CD4-positive, alpha-beta memory T cell (primary cell): ENCODE measurements at regions of chr1 and their contacts with region 1.

Region 1: DNA sequence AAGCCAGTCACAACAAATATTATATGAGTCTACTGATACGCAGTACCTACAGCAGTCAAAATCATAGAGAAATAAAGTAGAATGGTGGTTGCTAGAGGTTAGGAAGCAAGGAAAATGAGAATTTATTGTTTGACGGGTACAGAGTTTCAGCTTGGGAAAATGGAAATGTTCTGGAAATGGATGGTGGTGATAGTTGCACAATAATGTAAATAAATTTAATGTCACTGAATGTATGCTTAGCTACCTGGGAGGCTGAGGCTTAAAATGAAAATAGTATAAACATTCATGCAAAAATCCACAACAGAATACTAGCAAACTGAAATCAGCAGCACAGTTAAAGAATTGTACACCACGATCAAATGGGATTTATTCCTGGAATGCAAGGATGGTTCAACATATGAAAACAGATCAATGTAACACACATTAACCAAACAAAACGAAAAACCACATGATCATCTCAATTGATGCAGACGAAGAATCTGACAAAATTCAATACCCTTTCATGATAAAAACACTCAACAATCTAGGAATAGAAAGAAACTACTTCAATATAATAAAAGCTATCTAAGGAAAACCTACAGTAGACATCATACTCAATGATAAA is 10.7 kb downstream of the TUT4 start:
- DNase-seq: no peak
- H3K4me3 ChIP-seq: no peak overlapping the region
- H3K4me3 Mint-ChIP-seq: peak overlapping the region in 1 of 8 donors; percentile 22
- H3K27ac ChIP-seq: no peak overlapping the region
- H3K27ac Mint-ChIP-seq: peak overlapping the region in 1 of 7 donors; percentile 54
- H3K4me1 ChIP-seq: peaks cover 7% of the 10 kb centered on the region
- H3K4me1 Mint-ChIP-seq: peaks cover 18 to 32% (median 24%) of the 10 kb centered on the region in 4 donors
- H3K27me3 ChIP-seq: no peaks in the 10 kb centered on the region
- H3K27me3 Mint-ChIP-seq: no peaks in the 10 kb centered on the region

Region 2: DNA sequence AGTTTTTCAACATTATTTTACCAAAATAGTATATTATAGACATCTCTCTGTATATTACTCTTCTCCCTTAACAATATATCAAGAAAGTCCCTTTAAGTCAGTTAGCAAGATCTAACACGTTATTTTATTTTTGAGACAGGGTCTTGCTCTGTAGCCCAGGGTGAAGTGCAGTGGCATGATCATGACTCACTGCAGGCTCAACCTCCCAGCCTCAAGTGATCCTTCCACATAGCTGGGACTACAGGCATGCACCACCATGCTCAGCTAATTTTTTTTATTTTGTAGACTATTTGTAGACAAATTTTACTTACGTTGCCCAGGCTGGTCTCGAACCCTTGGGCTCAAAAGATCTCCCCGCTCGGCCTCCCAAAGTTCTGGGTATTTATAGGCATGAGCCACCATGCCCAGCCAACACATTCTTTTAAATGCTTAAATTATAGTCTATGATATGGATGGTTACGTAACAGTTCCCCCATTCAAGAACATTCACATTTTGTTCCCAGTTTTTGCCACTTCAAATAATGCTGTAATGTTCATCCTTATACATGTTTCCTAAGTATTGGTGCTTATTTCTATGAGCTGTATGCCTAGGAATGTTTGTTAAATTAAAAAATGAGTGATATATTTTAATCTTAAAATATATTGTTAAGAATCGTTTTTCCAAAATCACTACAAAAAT is 59.7 kb before region 1 on chr1:
- CTCF ChIA-PET with region 1: no interaction called
- POLR2A ChIA-PET with region 1: no interaction called
- intact Hi-C with region 1: loop called (anchors 10 kb)
- DNase-seq: no peak
- H3K4me3 ChIP-seq: no peak overlapping the region
- H3K4me3 Mint-ChIP-seq: no peak overlapping the region
- H3K27ac ChIP-seq: no peak overlapping the region
- H3K27ac Mint-ChIP-seq: no peak overlapping the region
- H3K4me1 ChIP-seq: no peaks in the 10 kb centered on the region
- H3K4me1 Mint-ChIP-seq: peaks cover 0 to 3% (median under 1%) of the 10 kb centered on the region in 4 donors
- H3K27me3 ChIP-seq: no peaks in the 10 kb centered on the region
- H3K27me3 Mint-ChIP-seq: no peaks in the 10 kb centered on the region

Region 3: GRCh38 chr1:52955129-52955970 is 413.2 kb after region 1 on chr1:
- CTCF ChIA-PET with region 1: no interaction called
- POLR2A ChIA-PET with region 1: no interaction called
- intact Hi-C with region 1: no loop called
- DNase-seq: no peak
- H3K4me3 ChIP-seq: no peak overlapping the region
- H3K4me3 Mint-ChIP-seq: no peak overlapping the region
- H3K27ac ChIP-seq: no peak overlapping the region
- H3K27ac Mint-ChIP-seq: peak overlapping the region in 1 of 7 donors; percentile 73
- H3K4me1 ChIP-seq: no peaks in the 10 kb centered on the region
- H3K4me1 Mint-ChIP-seq: no peaks in the 10 kb centered on the region
- H3K27me3 ChIP-seq: no peaks in the 10 kb centered on the region
- H3K27me3 Mint-ChIP-seq: no peaks in the 10 kb centered on the region